PC-3 (cell line): ENCODE measurements at regions of chr1 and their contacts with region 1.

Region 1: GRCh38 chr1:53485478-53486394 is 26.5 kb downstream of the DMRTB1 start:
- DNase-seq: peak; percentile 80
- ATAC-seq: peak; percentile 93
- H3K4me3 ChIP-seq: no peak overlapping the region
- H3K27ac ChIP-seq: no peak overlapping the region
- H3K4me1 ChIP-seq: no peaks in the 10 kb centered on the region
- H3K27me3 ChIP-seq: peaks cover 16% of the 10 kb centered on the region
- CTCF ChIP-seq: peak; percentile 89

Region 2: DNA sequence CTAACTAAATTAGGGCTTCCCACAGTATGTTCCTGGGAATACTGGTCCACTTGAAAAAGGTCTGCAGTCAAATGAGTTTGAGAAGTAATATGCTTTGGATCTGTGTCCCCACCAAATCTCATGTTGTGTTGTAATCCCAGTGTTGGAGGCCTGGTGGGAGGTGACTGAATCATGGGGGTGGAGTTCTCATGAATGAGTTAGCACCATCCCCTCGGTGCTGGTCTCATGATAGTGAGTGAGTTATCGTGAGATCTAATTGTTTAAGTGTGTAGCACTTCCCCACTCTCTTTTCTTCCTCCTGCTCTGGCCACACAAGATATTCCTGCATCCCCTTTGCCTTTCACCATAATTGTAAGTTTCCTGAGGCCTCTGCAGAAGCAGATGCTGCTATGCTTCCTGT is 43.4 kb before region 1 on chr1:
- CTCF ChIA-PET with region 1: no interaction called
- POLR2A ChIA-PET with region 1: no interaction called
- intact Hi-C with region 1: loop called (anchors 5 kb)
- DNase-seq: peak; percentile 20
- ATAC-seq: no peak; the same call in 1 of the 2 replicates
- H3K4me3 ChIP-seq: no peak overlapping the region
- H3K27ac ChIP-seq: no peak overlapping the region
- H3K4me1 ChIP-seq: no peaks in the 10 kb centered on the region
- H3K27me3 ChIP-seq: no peaks in the 10 kb centered on the region
- CTCF ChIP-seq: no peak

Region 3: GRCh38 chr1:53592521-53592982 is 106.8 kb after region 1 on chr1:
- CTCF ChIA-PET with region 1: interaction called, 3 read pairs
- POLR2A ChIA-PET with region 1: no interaction called
- intact Hi-C with region 1: loop called (anchors 1 kb)
- DNase-seq: peak; percentile 76
- ATAC-seq: peak; percentile 97
- H3K4me3 ChIP-seq: no peak overlapping the region
- H3K27ac ChIP-seq: no peak overlapping the region
- H3K4me1 ChIP-seq: peaks cover 4% of the 10 kb centered on the region; the same call in 1 of the 2 replicates
- H3K27me3 ChIP-seq: no peaks in the 10 kb centered on the region
- CTCF ChIP-seq: peak; percentile 56

Region 4: DNA sequence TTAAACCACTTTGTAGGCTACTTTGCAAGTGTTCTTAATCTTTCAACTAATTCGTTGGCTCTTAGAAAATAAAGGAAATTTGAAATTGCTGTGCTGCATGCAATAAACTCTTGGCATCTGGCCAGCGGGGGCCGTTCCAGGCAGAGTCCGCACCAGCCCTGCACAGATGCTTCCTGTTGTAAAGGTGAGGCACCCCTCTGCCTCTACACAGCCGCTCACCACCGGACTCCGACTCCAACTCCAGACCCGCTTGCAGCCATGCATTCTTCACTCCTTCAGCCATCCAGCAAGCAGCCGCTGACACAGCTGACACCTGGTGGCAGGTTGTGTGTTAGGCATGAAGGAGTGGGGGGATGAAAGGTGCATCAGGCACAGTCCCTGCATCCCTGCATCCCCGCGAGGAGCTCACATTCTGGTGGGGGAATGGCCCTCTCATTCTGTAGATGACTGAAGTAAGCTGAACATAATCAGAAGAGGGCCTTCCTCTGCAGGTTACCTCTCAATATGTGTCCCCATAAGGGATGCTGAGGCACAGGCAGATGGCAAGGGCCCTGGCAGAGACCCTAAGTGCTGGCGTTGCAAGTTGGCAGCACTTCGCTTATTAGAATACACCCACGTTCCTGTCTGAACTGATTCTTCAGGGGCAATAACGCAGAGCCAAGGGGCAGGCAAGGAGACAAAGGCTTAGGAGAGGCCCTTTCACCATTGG is 196.4 kb after region 1 on chr1:
- CTCF ChIA-PET with region 1: interaction called, 4 read pairs
- POLR2A ChIA-PET with region 1: no interaction called
- intact Hi-C with region 1: loop called (anchors 1 kb)
- DNase-seq: peak; percentile 71
- ATAC-seq: peak; percentile 87
- H3K4me3 ChIP-seq: no peak overlapping the region
- H3K27ac ChIP-seq: no peak overlapping the region
- H3K4me1 ChIP-seq: no peaks in the 10 kb centered on the region
- H3K27me3 ChIP-seq: no peaks in the 10 kb centered on the region
- CTCF ChIP-seq: peak; percentile 86

Region 5: GRCh38 chr1:53754484-53755312 is 269.0 kb after region 1 on chr1:
- CTCF ChIA-PET with region 1: no interaction called
- POLR2A ChIA-PET with region 1: no interaction called
- intact Hi-C with region 1: loop called (anchors 1 kb)
- DNase-seq: peak; percentile 82
- ATAC-seq: peak; percentile 88
- H3K4me3 ChIP-seq: no peak overlapping the region
- H3K27ac ChIP-seq: no peak overlapping the region
- H3K4me1 ChIP-seq: no peaks in the 10 kb centered on the region
- H3K27me3 ChIP-seq: no peaks in the 10 kb centered on the region
- CTCF ChIP-seq: peak; percentile 91